Endothelial cell of umbilical vein (primary cell): ENCODE measurements at regions of chr3 and their contacts with region 1.

Region 1: DNA sequence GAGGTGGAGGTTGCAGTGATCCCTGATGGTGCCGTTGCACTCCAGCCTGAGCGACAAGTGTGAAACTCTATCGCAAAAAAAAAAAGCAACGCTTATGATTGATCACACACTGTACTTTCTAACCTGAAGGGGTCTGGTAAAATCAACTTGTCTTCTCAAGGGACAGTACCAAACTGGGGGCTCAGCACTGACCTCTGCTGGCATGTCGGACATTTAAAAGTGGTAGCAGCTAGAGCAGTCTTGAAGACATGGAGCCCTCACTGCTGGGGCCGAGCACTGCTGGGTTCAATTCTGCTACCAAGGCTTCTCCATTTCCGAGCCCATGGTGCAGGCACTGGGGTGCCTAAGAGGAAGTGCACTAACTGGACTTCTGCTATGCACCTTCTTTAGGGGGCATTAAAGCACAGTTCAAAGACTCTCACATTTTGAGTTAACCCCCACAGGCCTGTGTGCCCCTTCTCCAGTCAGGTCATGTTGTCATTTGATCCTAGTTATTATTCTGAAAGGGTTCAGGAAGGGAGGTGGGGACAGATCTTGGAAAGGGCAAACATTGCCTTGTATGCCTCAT is 26.4 kb upstream of the LAMP3 start:
- DNase-seq: peak; percentile 47
- H3K4me3 ChIP-seq: no peak overlapping the region
- H3K27ac ChIP-seq: no peak overlapping the region
- H3K4me1 ChIP-seq: peaks cover 16% of the 10 kb centered on the region
- H3K27me3 ChIP-seq: no peaks in the 10 kb centered on the region
- CTCF ChIP-seq: peak; percentile 36 to 41
- POLR2A ChIP-seq: no peak

Region 2: GRCh38 chr3:183131735-183132134 is 57.2 kb before region 1 on chr3:
- CTCF ChIA-PET with region 1: interaction called, 21 read pairs
- POLR2A ChIA-PET with region 1: no interaction called
- dilution Hi-C with region 1: no loop called
- intact Hi-C with region 1: no loop called
- DNase-seq: peak; percentile 65
- H3K4me3 ChIP-seq: no peak overlapping the region
- H3K27ac ChIP-seq: peak overlapping the region; percentile 96
- H3K4me1 ChIP-seq: peaks cover 34% of the 10 kb centered on the region
- H3K27me3 ChIP-seq: no peaks in the 10 kb centered on the region
- CTCF ChIP-seq: no peak
- POLR2A ChIP-seq: no peak

Region 3: GRCh38 chr3:183244981-183245476 is 56.0 kb after region 1 on chr3:
- CTCF ChIA-PET with region 1: interaction called, 14 read pairs
- POLR2A ChIA-PET with region 1: no interaction called
- dilution Hi-C with region 1: no loop called
- intact Hi-C with region 1: no loop called
- DNase-seq: peak; percentile 28
- H3K4me3 ChIP-seq: no peak overlapping the region
- H3K27ac ChIP-seq: no peak overlapping the region
- H3K4me1 ChIP-seq: peaks cover 12% of the 10 kb centered on the region
- H3K27me3 ChIP-seq: no peaks in the 10 kb centered on the region
- CTCF ChIP-seq: no peak
- POLR2A ChIP-seq: no peak

Region 4: GRCh38 chr3:183275418-183275817 is 86.4 kb after region 1 on chr3:
- CTCF ChIA-PET with region 1: interaction called, 12 read pairs
- POLR2A ChIA-PET with region 1: no interaction called
- dilution Hi-C with region 1: no loop called
- intact Hi-C with region 1: no loop called
- DNase-seq: peak; percentile 82
- H3K4me3 ChIP-seq: no peak overlapping the region
- H3K27ac ChIP-seq: peak overlapping the region; percentile 54
- H3K4me1 ChIP-seq: peaks cover 27% of the 10 kb centered on the region
- H3K27me3 ChIP-seq: no peaks in the 10 kb centered on the region
- CTCF ChIP-seq: no peak
- POLR2A ChIP-seq: no peak

Region 5: DNA sequence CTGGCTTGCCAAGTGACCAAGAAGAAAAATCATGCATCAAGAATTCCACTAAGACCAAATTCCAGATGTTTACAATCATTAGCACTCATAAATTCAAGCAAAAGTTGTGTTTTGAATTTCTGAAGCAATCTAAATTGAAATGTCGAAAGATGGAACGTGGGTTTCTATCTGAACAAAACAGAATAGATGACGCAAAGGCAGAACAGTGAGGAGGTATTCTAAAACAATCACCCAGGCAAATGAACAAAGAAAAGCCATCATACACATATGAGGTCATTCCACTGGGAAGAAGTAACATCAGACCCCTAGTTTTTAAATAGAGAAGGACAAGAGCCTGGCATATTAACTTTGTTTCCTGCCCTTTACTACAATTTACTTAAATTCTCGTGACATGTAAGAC is 181.4 kb after region 1 on chr3:
- CTCF ChIA-PET with region 1: interaction called, 20 read pairs
- POLR2A ChIA-PET with region 1: no interaction called
- dilution Hi-C with region 1: no loop called
- intact Hi-C with region 1: no loop called
- DNase-seq: no peak
- H3K4me3 ChIP-seq: no peak overlapping the region
- H3K27ac ChIP-seq: peak overlapping the region; percentile 98
- H3K4me1 ChIP-seq: peaks cover 17% of the 10 kb centered on the region
- H3K27me3 ChIP-seq: no peaks in the 10 kb centered on the region
- CTCF ChIP-seq: no peak
- POLR2A ChIP-seq: no peak

Region 6: DNA sequence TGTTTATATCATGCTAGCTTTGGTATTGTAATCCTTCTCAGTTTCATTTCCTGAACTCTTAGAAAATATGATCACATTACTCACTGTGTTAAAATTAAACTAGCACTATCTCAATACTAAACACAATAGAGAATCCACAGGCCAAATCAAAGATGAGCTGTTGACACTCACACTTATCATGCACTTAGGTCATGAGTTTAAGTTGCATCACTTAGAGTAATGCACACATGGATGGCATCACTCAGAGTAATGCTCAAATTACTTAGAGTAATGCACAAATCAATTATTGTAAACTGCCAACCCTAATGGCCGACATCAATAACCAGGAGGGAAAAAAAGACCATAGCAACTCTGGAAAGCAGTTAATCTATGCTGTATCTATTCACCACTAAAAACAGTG is 279.4 kb after region 1 on chr3:
- CTCF ChIA-PET with region 1: interaction called, 8 read pairs
- POLR2A ChIA-PET with region 1: no interaction called
- dilution Hi-C with region 1: no loop called
- intact Hi-C with region 1: loop called (anchors 2 kb)
- DNase-seq: no peak
- H3K4me3 ChIP-seq: no peak overlapping the region
- H3K27ac ChIP-seq: no peak overlapping the region
- H3K4me1 ChIP-seq: peaks cover 6% of the 10 kb centered on the region
- H3K27me3 ChIP-seq: no peaks in the 10 kb centered on the region
- CTCF ChIP-seq: no peak
- POLR2A ChIP-seq: no peak

Region 7: GRCh38 chr3:183766745-183767606 is 578.0 kb after region 1 on chr3:
- CTCF ChIA-PET with region 1: interaction called, 16 read pairs
- POLR2A ChIA-PET with region 1: no interaction called
- dilution Hi-C with region 1: no loop called
- intact Hi-C with region 1: loop called (anchors 5 kb)
- DNase-seq: peak; percentile 74
- H3K4me3 ChIP-seq: no peak overlapping the region
- H3K27ac ChIP-seq: no peak overlapping the region
- H3K4me1 ChIP-seq: peaks cover 22% of the 10 kb centered on the region
- H3K27me3 ChIP-seq: no peaks in the 10 kb centered on the region
- CTCF ChIP-seq: peak; percentile 69 to 80
- POLR2A ChIP-seq: no peak